Psoas muscle (tissue), 8 donors: ENCODE measurements at regions of chr9 and their contacts with region 1.

Region 1: DNA sequence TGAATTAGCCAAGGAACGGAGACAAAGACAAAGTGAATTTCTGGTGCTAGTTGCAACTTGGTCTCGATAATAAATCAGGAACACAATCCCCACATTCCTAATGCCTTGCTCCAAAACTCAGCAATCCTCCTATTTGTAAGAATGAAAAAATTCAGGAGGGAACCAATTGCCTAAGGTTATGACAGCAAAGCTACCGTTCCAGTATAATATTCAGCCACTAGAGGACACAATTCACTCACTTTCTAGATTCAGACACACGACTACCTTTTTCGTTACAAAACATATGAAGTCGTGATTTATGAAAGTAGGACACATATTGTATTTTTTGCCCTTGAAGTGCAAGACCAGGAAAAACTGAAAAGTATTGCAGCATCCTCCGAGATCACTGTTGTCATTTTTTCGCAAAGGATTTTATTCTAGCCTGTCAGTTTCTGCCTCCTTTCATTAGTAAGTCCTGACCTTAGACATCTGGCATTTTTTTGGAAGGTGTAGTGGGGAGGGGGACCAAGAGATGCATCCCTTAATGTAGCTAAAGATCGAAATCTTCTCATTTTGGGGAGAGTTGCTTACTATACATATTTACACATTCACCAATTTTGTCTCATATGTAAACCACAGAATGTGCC is 133.1 kb downstream of the DOCK8 start:
- DNase-seq: no peak
- ATAC-seq: peak; percentile 33 to 79 (median 60)
- H3K4me3 ChIP-seq: no peak overlapping the region
- H3K27ac ChIP-seq: no peak overlapping the region
- H3K4me1 ChIP-seq: no peaks in the 10 kb centered on the region
- H3K27me3 ChIP-seq: peaks cover 0 to 6% (median 2%) of the 10 kb centered on the region in 3 donors
- CTCF ChIP-seq: peak; percentile 88

Region 2: GRCh38 chr9:546797-547223 is 199.0 kb after region 1 on chr9:
- intact Hi-C with region 1: loop called in 1 of 2 experiments (anchors 10 kb)
- DNase-seq: no peak
- ATAC-seq: peak; percentile 42 to 82 (median 58)
- H3K4me3 ChIP-seq: peak overlapping the region; percentile 45
- H3K27ac ChIP-seq: no peak overlapping the region
- H3K4me1 ChIP-seq: peaks cover 5% of the 10 kb centered on the region
- H3K27me3 ChIP-seq: no peaks in the 10 kb centered on the region
- CTCF ChIP-seq: peak; percentile 44